ENCODE measurements at regions of chr2 and their contacts with region 1.

Region 1: GRCh38 chr2:74715078-74715791 is 61.2 kb downstream of the SEMA4F start:
- DNase-seq: peak; percentile 84
- H3K4me3 Mint-ChIP-seq: peak overlapping the region; percentile 79
- H3K27ac Mint-ChIP-seq: no peak overlapping the region
- H3K4me1 Mint-ChIP-seq: no peaks in the 10 kb centered on the region
- H3K27me3 Mint-ChIP-seq: no peaks in the 10 kb centered on the region
- CTCF ChIP-seq: peak; percentile 73

Region 2: DNA sequence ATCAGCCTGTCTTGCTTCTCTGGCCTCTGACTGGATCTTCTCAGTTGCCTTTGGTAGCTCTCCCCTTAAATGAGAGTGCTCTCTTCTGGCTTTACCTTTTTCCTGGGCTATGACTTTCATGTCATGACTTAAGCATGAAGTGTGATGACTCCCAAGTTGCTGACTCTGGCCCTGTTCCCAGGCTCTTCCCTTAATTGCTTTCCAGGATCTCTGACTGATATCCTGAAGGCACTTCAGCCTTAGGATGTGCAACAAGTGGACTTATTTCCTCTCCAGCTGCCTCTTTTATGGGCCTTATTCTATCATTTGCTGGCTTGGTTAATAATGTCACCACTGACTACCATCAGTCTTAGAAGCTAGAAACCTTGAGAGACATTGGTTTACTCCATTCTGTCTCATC is 43.8 kb before region 1 on chr2:
- CTCF ChIA-PET with region 1: no interaction called
- POLR2A ChIA-PET with region 1: no interaction called
- intact Hi-C with region 1: no loop called
- DNase-seq: peak; percentile 55
- H3K4me3 Mint-ChIP-seq: no peak overlapping the region
- H3K27ac Mint-ChIP-seq: no peak overlapping the region
- H3K4me1 Mint-ChIP-seq: peaks cover 8% of the 10 kb centered on the region
- H3K27me3 Mint-ChIP-seq: no peaks in the 10 kb centered on the region
- CTCF ChIP-seq: no peak

Region 3: GRCh38 chr2:74690571-74690970 is 24.7 kb before region 1 on chr2:
- CTCF ChIA-PET with region 1: interaction called, 16 read pairs
- POLR2A ChIA-PET with region 1: no interaction called
- intact Hi-C with region 1: loop called (anchors 2 kb)
- DNase-seq: peak; percentile 75
- H3K4me3 Mint-ChIP-seq: no peak overlapping the region
- H3K27ac Mint-ChIP-seq: no peak overlapping the region
- H3K4me1 Mint-ChIP-seq: peaks cover 6% of the 10 kb centered on the region
- H3K27me3 Mint-ChIP-seq: no peaks in the 10 kb centered on the region
- CTCF ChIP-seq: peak; percentile 89

Region 4: GRCh38 chr2:74725287-74725686 is 10.1 kb after region 1 on chr2:
- CTCF ChIA-PET with region 1: interaction called, 25 read pairs
- POLR2A ChIA-PET with region 1: interaction called, 8 read pairs
- intact Hi-C with region 1: no loop called
- DNase-seq: no peak
- H3K4me3 Mint-ChIP-seq: no peak overlapping the region
- H3K27ac Mint-ChIP-seq: no peak overlapping the region
- H3K4me1 Mint-ChIP-seq: no peaks in the 10 kb centered on the region
- H3K27me3 Mint-ChIP-seq: no peaks in the 10 kb centered on the region
- CTCF ChIP-seq: no peak

Region 5: GRCh38 chr2:74833418-74834233 is 118.4 kb after region 1 on chr2 and contains the start of gene HK2:
- CTCF ChIA-PET with region 1: interaction called, 77 read pairs
- POLR2A ChIA-PET with region 1: interaction called, 29 read pairs
- intact Hi-C with region 1: loop called (anchors 1 kb)
- DNase-seq: peak; percentile 88
- H3K4me3 Mint-ChIP-seq: peak within 1 kb of the TSS; percentile 85
- H3K27ac Mint-ChIP-seq: peak within 1 kb of the TSS; percentile 86
- H3K4me1 Mint-ChIP-seq: peaks cover 34% of the 10 kb centered on the region
- H3K27me3 Mint-ChIP-seq: no peaks in the 10 kb centered on the region
- CTCF ChIP-seq: no peak
- total RNA-seq, gene HK2: 40.4 and 47.8 TPM in 2 replicates

Region 6: GRCh38 chr2:74982577-74982976 is 267.3 kb after region 1 on chr2:
- CTCF ChIA-PET with region 1: interaction called, 10 read pairs
- POLR2A ChIA-PET with region 1: no interaction called
- intact Hi-C with region 1: loop called (anchors 1 kb)
- DNase-seq: peak; percentile 55
- H3K4me3 Mint-ChIP-seq: no peak overlapping the region
- H3K27ac Mint-ChIP-seq: no peak overlapping the region
- H3K4me1 Mint-ChIP-seq: no peaks in the 10 kb centered on the region
- H3K27me3 Mint-ChIP-seq: no peaks in the 10 kb centered on the region
- CTCF ChIP-seq: peak; percentile 43